IMR-90 (cell line): ENCODE measurements at regions of chr1 and their contacts with region 1.

Region 1: DNA sequence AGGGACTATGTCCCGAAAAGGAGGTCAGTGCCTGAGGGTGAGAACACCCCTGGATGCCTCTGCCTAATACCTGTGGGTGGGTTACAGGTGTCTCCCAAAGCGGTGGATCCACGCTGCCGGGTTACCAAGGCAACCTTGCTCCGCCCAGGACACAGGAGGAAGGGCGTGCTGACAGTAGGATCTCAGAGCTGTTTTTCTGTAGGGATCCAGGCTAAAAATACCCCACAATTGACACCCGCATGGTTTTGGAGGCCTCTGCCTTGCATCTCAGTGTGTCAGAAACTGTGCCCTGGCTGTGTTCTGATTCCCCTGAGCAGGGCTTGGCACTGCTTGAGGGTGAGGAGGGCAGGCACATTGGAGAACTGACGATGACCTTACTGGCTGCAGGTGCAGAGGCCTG is 118.0 kb downstream of the IER5 start:
- DNase-seq: no peak
- ATAC-seq: no peak
- H3K4me3 ChIP-seq: no peak overlapping the region
- H3K27ac ChIP-seq: no peak overlapping the region
- H3K4me1 ChIP-seq: no peaks in the 10 kb centered on the region
- H3K27me3 ChIP-seq: peaks cover 30% of the 10 kb centered on the region
- CTCF ChIP-seq: no peak
- POLR2A ChIP-seq: no peak
- RAD21 ChIP-seq: no peak

Region 2: DNA sequence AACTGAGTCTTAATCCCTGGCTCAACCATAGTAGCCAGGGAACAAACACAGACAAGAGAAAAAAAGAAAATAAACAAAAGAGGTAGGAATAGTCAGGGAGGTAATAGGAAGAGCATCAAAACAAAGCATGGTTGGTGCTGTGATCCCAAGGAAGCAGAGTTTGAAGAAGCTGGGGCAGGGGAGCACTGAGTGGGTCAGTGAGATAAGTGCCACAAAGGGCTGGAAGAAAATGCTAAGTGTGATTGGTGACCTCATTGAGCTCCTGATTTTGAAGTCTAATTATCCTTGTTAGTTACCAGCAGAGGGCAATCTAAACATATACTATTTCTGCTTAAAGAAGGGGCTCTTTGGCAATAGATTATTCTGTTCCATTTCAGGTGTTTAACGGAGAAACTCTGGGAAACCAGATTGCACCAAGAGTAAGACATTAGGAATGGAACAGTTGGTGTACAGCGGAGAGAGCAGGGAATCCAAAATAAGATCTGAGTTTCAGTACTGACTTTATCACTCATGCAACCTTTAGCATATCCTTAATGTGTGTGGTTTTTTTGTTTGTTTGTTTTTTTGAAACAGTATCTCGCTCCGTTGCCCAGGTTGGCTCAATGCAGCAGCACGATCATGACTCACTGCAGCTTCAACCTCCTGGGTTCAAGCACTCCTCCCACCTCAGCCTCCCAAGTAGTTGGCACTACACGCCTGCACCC is 324.6 kb before region 1 on chr1:
- CTCF ChIA-PET with region 1: no interaction called
- POLR2A ChIA-PET with region 1: no interaction called
- dilution Hi-C with region 1: no loop called
- in situ Hi-C with region 1: no loop called
- intact Hi-C with region 1: no loop called
- DNase-seq: peak; percentile 67
- ATAC-seq: peak; percentile 75
- H3K4me3 ChIP-seq: no peak overlapping the region
- H3K27ac ChIP-seq: no peak overlapping the region
- H3K4me1 ChIP-seq: peaks cover 4% of the 10 kb centered on the region
- H3K27me3 ChIP-seq: no peaks in the 10 kb centered on the region
- CTCF ChIP-seq: peak; percentile 70
- POLR2A ChIP-seq: no peak
- RAD21 ChIP-seq: peak; percentile 62

Region 3: GRCh38 chr1:181142096-181142958 is 64.2 kb before region 1 on chr1:
- CTCF ChIA-PET with region 1: no interaction called
- POLR2A ChIA-PET with region 1: no interaction called
- dilution Hi-C with region 1: no loop called
- in situ Hi-C with region 1: no loop called
- intact Hi-C with region 1: no loop called
- DNase-seq: peak; percentile 89
- ATAC-seq: peak; percentile 93
- H3K4me3 ChIP-seq: peak overlapping the region; percentile 6; the same call in 1 of the 2 replicates
- H3K27ac ChIP-seq: peak overlapping the region; percentile 59
- H3K4me1 ChIP-seq: peaks cover 29% of the 10 kb centered on the region
- H3K27me3 ChIP-seq: no peaks in the 10 kb centered on the region
- CTCF ChIP-seq: peak; percentile 98
- POLR2A ChIP-seq: peak; percentile 45; the same call in 1 of the 2 replicates
- RAD21 ChIP-seq: peak; percentile 100

Region 4: DNA sequence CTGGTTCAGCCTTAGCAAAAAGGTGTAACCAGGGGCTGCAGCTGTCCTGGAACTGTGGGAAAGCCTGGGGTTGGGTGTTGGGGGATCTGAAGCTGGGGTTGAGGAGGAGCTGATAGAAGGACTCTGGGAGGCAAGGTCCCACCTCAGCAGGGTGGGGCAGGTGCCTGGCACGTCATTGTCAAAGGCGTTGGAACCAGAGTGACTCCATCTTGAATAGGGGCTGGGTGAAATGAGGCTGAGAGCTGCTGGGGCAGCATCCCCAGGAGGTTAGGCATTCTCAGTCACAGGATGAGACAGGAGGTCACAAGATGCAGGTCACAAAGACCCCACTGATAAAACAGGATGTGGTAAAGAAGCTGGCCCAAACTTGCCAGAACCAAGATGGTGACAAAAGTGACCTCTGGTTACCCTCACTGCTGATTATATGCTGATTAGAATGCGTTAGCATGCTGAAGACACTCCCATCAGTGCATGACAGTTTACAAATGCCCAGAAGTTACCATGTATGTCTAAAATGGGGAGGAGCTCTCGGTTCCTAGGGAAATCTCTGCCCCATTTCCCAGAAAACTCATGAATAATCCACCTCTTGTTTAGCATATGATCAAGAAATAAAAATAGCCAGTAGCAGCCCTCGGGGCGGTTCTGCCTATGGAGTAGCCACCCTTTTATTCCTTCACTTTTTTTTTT is 32.6 kb before region 1 on chr1:
- CTCF ChIA-PET with region 1: no interaction called
- POLR2A ChIA-PET with region 1: no interaction called
- dilution Hi-C with region 1: no loop called
- in situ Hi-C with region 1: no loop called
- intact Hi-C with region 1: no loop called
- DNase-seq: no peak
- ATAC-seq: no peak
- H3K4me3 ChIP-seq: no peak overlapping the region
- H3K27ac ChIP-seq: no peak overlapping the region
- H3K4me1 ChIP-seq: no peaks in the 10 kb centered on the region
- H3K27me3 ChIP-seq: peaks cover 10% of the 10 kb centered on the region; the same call in 1 of the 2 replicates
- CTCF ChIP-seq: no peak
- POLR2A ChIP-seq: no peak
- RAD21 ChIP-seq: no peak

Region 5: GRCh38 chr1:181390410-181391077 is 184.0 kb after region 1 on chr1:
- CTCF ChIA-PET with region 1: no interaction called
- POLR2A ChIA-PET with region 1: no interaction called
- dilution Hi-C with region 1: no loop called
- in situ Hi-C with region 1: no loop called
- intact Hi-C with region 1: no loop called
- DNase-seq: no peak
- ATAC-seq: no peak
- H3K4me3 ChIP-seq: no peak overlapping the region
- H3K27ac ChIP-seq: no peak overlapping the region
- H3K4me1 ChIP-seq: no peaks in the 10 kb centered on the region
- H3K27me3 ChIP-seq: no peaks in the 10 kb centered on the region
- CTCF ChIP-seq: no peak
- POLR2A ChIP-seq: no peak
- RAD21 ChIP-seq: no peak

Region 6: GRCh38 chr1:181424786-181425403 is 218.4 kb after region 1 on chr1:
- CTCF ChIA-PET with region 1: interaction called, 3 read pairs
- POLR2A ChIA-PET with region 1: no interaction called
- dilution Hi-C with region 1: loop called (anchors 25 kb)
- in situ Hi-C with region 1: no loop called
- intact Hi-C with region 1: no loop called
- DNase-seq: peak; percentile 58
- ATAC-seq: peak; percentile 95
- H3K4me3 ChIP-seq: no peak overlapping the region
- H3K27ac ChIP-seq: no peak overlapping the region
- H3K4me1 ChIP-seq: no peaks in the 10 kb centered on the region
- H3K27me3 ChIP-seq: no peaks in the 10 kb centered on the region; the same call in 1 of the 2 replicates
- CTCF ChIP-seq: peak; percentile 99
- POLR2A ChIP-seq: no peak
- RAD21 ChIP-seq: peak; percentile 73

Region 7: GRCh38 chr1:182069028-182069466 is 862.5 kb after region 1 on chr1:
- CTCF ChIA-PET with region 1: no interaction called
- POLR2A ChIA-PET with region 1: no interaction called
- dilution Hi-C with region 1: no loop called
- in situ Hi-C with region 1: loop called (anchors 25 kb)
- intact Hi-C with region 1: no loop called
- DNase-seq: peak; percentile 14
- ATAC-seq: peak; percentile 80
- H3K4me3 ChIP-seq: no peak overlapping the region
- H3K27ac ChIP-seq: no peak overlapping the region
- H3K4me1 ChIP-seq: no peaks in the 10 kb centered on the region
- H3K27me3 ChIP-seq: no peaks in the 10 kb centered on the region
- CTCF ChIP-seq: peak; percentile 49
- POLR2A ChIP-seq: no peak
- RAD21 ChIP-seq: peak; percentile 33; the same call in 1 of the 2 replicates